Activated CD4-positive, alpha-beta memory T cell treated with anti-CD3 and anti-CD28 coated beads, Interleukin-2, amount 10 ng/mL, durations not matched to agents 7 days and 5 days (primary cell): ENCODE measurements at regions of chr2 and their contacts with region 1.

Region 1: DNA sequence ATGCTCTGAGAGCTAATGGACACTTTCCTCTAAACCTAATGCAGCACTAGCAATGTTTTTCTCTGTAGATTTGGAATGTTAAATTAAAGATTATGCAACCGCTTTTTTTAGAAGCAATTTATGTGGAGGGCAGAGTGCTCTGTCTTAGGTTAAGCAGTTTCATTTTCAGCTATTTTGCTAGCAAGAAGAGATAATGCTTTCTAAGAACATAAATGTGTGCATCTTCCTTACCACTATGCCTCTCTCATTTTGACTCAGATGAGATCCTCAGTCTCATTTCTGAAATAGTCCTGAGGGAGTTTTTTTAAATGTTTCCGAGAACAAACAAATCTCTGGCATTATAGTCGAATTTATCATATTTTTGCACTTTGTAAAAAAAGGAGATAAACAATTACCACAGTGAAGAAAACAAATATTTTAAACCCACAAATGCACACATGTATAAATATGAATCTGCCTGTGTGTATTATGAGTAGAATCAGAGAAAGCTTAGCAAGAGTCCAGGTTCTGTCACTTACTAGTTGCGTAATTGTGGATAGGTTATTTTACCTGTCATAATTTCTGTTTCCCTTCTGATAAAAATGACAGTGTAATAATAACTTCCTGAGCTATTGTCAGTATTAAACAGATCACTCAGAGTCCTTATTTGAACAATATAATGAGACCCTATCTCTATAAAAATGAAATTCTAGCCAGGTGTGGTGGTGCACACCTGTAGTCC is 207.7 kb upstream of the CRIM1 start:
- DNase-seq: no peak
- H3K4me3 Mint-ChIP-seq: peak overlapping the region; percentile 42
- H3K27ac Mint-ChIP-seq: peak overlapping the region; percentile 79
- H3K4me1 Mint-ChIP-seq: peaks cover 33% of the 10 kb centered on the region
- H3K27me3 Mint-ChIP-seq: peaks cover 8% of the 10 kb centered on the region

Region 2: GRCh38 chr2:36137612-36138011 is 10.2 kb before region 1 on chr2:
- CTCF ChIA-PET with region 1: interaction called, 4 read pairs
- POLR2A ChIA-PET with region 1: interaction called, 11 read pairs
- DNase-seq: no peak
- H3K4me3 Mint-ChIP-seq: no peak overlapping the region
- H3K27ac Mint-ChIP-seq: no peak overlapping the region
- H3K4me1 Mint-ChIP-seq: peaks cover 24% of the 10 kb centered on the region
- H3K27me3 Mint-ChIP-seq: peaks cover 38% of the 10 kb centered on the region

Region 3: DNA sequence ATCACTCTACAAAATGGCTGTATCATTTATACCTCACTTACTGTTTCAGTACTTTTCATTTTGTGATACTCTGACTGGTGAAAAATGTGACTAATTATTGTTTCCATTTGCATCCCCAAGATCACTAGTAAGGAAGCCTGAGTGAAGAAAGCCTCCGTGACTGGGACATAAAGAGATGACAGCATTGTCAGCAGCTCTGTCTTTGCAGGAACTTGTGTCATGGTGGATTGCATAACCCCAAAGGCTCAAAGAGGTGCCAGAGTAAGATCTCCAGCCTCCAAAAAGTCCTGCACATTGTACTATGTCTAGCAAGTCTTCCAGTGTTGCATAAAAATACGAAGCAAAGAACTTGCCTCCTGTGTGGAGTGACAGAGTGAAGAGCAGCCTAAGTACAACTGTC is 20.3 kb after region 1 on chr2:
- CTCF ChIA-PET with region 1: no interaction called
- POLR2A ChIA-PET with region 1: no interaction called
- DNase-seq: no peak
- H3K4me3 Mint-ChIP-seq: no peak overlapping the region
- H3K27ac Mint-ChIP-seq: no peak overlapping the region
- H3K4me1 Mint-ChIP-seq: peaks cover 4% of the 10 kb centered on the region
- H3K27me3 Mint-ChIP-seq: peaks cover 7% of the 10 kb centered on the region

Region 4: DNA sequence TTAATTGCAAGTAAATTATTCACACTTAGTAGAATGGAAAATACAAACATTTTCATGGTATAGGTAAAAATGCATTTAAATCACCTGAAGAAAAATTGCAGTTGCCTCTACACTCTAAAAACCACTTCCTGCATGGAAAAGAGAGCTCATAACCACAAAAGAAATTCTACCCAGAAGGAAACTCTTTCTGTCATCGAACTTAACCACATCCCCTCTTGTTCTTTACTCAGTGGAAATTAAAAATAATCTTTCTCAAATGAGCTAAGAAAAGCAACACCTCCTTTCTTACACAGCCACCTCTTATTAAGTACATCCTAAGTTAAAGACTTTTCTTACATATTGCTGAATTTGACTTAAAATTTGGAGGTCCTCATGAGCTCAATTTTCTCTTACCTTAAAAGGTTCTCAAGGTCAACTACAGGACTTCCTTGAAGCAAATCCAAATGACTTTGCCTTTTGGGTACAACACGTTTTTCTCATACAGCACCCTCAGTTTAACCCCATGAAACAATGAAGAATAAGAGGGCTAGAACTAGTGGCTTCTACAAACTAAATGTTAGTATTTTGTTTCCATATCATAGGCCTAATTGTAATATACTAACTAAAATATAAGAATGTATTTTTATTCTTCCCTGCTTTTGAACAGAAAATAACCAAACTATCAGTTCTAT is 98.6 kb after region 1 on chr2:
- CTCF ChIA-PET with region 1: interaction called, 11 read pairs
- POLR2A ChIA-PET with region 1: interaction called, 29 read pairs
- DNase-seq: no peak
- H3K4me3 Mint-ChIP-seq: peak overlapping the region; percentile 34
- H3K27ac Mint-ChIP-seq: peak overlapping the region; percentile 95
- H3K4me1 Mint-ChIP-seq: peaks cover 63% of the 10 kb centered on the region
- H3K27me3 Mint-ChIP-seq: peaks cover 7% of the 10 kb centered on the region